PC-3 (cell line): ENCODE measurements at regions of chr2 and their contacts with region 1.

Region 1: DNA sequence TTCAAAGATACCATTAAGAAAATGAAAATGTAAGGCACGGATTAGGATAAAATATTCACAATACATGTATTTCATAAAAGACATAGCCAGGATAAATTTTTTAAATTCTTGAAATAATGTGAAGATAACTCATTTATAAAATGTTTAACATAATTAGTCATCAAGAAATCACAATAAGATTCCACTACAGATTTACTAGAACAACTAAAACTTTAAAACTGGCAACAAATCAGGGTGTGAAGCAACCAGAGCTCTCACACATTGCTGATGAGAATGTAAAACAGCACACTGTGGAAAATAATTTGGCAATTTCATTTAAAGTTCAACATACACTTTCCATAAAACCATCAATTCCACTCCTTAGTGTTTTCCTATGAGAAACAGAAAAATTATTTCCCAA is 89.6 kb upstream of the UBE2E3 start:
- DNase-seq: peak; percentile 13
- ATAC-seq: no peak
- H3K4me3 ChIP-seq: no peak overlapping the region
- H3K27ac ChIP-seq: no peak overlapping the region
- H3K4me1 ChIP-seq: no peaks in the 10 kb centered on the region
- H3K27me3 ChIP-seq: no peaks in the 10 kb centered on the region
- CTCF ChIP-seq: no peak

Region 2: DNA sequence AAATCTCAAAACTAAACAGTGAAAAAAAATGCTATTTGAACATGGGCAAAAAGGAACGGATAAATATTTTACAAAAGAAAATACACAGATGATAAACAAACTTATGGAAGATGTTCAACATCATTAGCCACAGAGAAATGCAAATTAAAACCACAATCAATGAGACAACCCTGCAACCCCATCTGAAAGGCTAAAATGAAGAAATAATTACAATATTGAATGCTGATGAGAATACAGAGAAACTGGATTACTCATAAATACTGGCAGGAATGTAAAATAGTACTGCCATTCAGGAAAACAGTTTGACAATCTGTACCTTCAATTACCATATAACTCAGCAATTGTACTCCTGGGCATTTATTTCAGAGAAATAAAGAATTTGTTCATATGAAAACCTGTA is 103.5 kb before region 1 on chr2:
- CTCF ChIA-PET with region 1: no interaction called
- POLR2A ChIA-PET with region 1: no interaction called
- intact Hi-C with region 1: no loop called
- DNase-seq: peak; percentile 72
- ATAC-seq: peak; percentile 96
- H3K4me3 ChIP-seq: no peak overlapping the region
- H3K27ac ChIP-seq: peak overlapping the region; percentile 48
- H3K4me1 ChIP-seq: peaks cover 15% of the 10 kb centered on the region
- H3K27me3 ChIP-seq: no peaks in the 10 kb centered on the region
- CTCF ChIP-seq: no peak

Region 3: GRCh38 chr2:180970016-180970415 is 79.2 kb after region 1 on chr2:
- CTCF ChIA-PET with region 1: no interaction called
- POLR2A ChIA-PET with region 1: no interaction called
- intact Hi-C with region 1: loop called (anchors 5 kb)
- DNase-seq: peak; percentile 50
- ATAC-seq: peak; percentile 96
- H3K4me3 ChIP-seq: no peak overlapping the region
- H3K27ac ChIP-seq: no peak overlapping the region
- H3K4me1 ChIP-seq: peaks cover 14% of the 10 kb centered on the region
- H3K27me3 ChIP-seq: no peaks in the 10 kb centered on the region
- CTCF ChIP-seq: no peak